ENCODE measurements at regions of chr3 and their contacts with region 1.

Region 1: GRCh38 chr3:45958321-45958791 is 15.1 kb downstream of the CXCR6 start:
- DNase-seq: no peak
- ATAC-seq: no peak
- H3K4me3 Mint-ChIP-seq: no peak overlapping the region
- H3K27ac Mint-ChIP-seq: peak overlapping the region; percentile 44
- H3K4me1 Mint-ChIP-seq: peaks cover 31% of the 10 kb centered on the region
- H3K27me3 Mint-ChIP-seq: no peaks in the 10 kb centered on the region
- CTCF ChIP-seq: no peak

Region 2: DNA sequence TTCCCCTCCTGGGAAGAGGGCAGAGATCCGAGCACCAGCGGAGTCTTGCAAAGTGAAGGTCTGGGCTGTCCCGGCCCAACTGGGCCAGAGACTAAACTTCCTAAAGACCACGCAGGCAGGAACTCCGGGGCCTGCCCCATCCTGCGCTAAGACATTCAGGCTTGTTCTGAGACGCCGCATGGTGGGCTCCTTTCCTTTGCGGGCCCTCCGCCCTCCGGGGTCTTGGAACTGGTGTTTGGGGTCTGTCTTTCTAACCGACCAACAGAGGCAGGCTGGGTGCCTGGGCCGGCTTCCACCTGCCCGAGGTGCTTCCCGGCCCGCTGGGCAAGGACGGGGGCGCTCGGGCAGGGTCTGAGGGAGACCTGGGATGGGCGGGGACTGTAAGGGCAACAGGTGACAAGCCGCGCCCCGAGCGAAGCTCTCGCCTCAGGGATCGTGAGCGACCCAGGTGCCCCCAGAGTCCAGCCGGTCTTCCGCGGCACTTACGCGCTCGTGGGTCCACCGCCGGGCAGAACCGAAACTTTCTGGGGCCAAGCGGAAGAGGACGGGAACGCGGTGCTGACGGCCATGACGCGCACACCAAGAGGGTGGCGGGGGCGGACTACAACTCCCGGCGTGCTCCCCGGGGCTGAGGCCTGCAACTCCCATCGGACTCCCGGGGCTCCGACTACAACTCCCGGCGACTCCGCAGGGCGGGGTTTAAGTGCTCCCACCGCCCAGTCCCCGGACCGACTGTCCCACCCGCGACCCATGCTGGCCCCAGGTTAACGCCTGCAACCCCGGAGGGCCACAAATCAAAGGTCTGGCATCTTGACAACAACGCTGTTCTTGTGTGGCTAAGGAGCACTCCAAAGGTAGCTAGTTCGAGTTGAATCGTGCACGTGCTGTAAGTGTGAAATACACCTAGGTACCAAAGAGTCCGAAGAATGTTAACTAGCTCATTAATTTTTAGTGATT is 37.2 kb after region 1 on chr3 and contains the start of gene FYCO1:
- CTCF ChIA-PET with region 1: interaction called, 5 read pairs
- POLR2A ChIA-PET with region 1: interaction called, 11 read pairs
- intact Hi-C with region 1: no loop called
- DNase-seq: peak; percentile 96
- ATAC-seq: peak; percentile 82
- H3K4me3 Mint-ChIP-seq: peak within 1 kb of the TSS; percentile 83
- H3K27ac Mint-ChIP-seq: peak within 1 kb of the TSS; percentile 91
- H3K4me1 Mint-ChIP-seq: peaks cover 46% of the 10 kb centered on the region
- H3K27me3 Mint-ChIP-seq: peaks cover 4% of the 10 kb centered on the region
- CTCF ChIP-seq: no peak
- total RNA-seq, gene FYCO1: 14.1 to 14.5 TPM

Region 3: DNA sequence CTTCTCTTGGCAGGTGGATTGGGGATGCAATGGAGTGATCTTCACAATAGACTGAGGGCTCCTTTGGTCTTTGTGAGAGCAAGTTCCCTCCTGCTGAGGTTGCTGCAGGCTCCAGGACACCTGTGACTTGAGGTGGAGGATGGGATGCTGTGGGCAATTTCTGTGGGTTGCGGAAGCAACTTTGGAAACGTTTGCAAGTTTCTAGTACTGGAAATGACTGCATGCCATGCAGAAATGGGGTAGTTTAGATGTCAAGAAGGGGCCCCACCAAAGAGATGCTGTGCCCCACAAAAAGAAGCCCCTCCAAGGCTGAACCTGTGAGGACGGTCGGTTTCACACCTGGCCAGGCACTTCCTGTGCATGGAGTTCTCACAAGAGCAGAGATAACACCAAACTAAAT is 149.3 kb after region 1 on chr3:
- CTCF ChIA-PET with region 1: no interaction called
- POLR2A ChIA-PET with region 1: no interaction called
- intact Hi-C with region 1: no loop called
- DNase-seq: peak; percentile 34
- ATAC-seq: no peak
- H3K4me3 Mint-ChIP-seq: no peak overlapping the region
- H3K27ac Mint-ChIP-seq: peak overlapping the region; percentile 19
- H3K4me1 Mint-ChIP-seq: peaks cover 54% of the 10 kb centered on the region
- H3K27me3 Mint-ChIP-seq: peaks cover 12% of the 10 kb centered on the region
- CTCF ChIP-seq: no peak